ENCODE measurements at regions of chr5 and their contacts with region 1.

Region 1: GRCh38 chr5:177497292-177498033 is at the start of gene PDLIM7:
- DNase-seq: peak; percentile 98
- ATAC-seq: peak; percentile 88
- H3K4me3 ChIP-seq: peak within 1 kb of the TSS; percentile 66 to 67
- H3K27ac ChIP-seq: peak within 1 kb of the TSS; percentile 95 to 99
- H3K4me1 ChIP-seq: no peaks in the 10 kb centered on the region
- H3K27me3 ChIP-seq: no peaks in the 10 kb centered on the region
- total RNA-seq, gene PDLIM7: 510 to 729 TPM

Region 2: GRCh38 chr5:177390363-177391300 is 106.8 kb before region 1 on chr5:
- intact Hi-C with region 1: loop called (anchors 1 to 5 kb)
- DNase-seq: peak; percentile 85 to 89
- ATAC-seq: peak; percentile 92
- H3K4me3 ChIP-seq: no peak overlapping the region
- H3K27ac ChIP-seq: no peak overlapping the region
- H3K4me1 ChIP-seq: no peaks in the 10 kb centered on the region
- H3K27me3 ChIP-seq: no peaks in the 10 kb centered on the region

Region 3: DNA sequence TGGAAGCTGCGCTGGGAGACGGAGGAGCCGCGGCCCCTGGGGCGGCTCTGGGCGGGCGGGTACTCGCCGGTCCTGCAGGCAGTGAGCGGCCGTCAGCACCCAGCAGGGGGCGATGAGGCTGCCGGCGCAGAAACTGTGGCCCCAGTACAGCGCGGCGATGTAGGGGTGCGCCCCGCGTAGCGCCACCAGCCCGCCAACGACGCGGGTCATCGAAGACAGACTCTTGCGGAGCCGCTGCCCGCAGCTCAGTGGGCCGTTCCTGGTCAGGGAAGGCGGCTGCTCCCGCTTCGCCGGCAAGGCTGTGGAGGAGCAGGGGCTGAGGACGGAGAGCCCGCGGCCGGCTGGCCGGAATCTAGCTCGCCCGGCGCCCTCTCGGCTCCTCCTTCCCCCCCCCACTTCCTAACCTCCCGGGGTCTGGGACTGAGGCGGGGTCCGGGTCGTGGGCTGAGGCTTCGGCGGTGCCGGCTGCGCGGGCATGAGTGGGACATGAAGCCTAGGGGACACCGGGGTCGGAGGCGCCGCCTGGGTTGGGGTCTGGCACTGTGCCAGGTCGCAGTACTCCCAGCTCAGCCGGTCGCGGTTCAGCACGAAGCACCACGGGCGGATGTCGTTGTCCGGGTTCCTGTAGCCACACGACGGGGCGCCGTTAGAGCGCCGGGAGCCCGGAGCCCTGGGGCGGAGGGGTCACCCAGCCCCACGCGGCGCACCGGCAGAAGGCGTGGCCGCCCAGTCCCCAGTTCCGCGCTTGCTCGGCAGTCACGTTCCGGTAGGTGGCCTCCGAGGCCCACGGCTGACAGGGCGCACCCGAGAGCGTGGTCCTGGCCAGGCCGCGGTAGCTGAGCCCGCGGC is 93.4 kb before region 1 on chr5:
- intact Hi-C with region 1: no loop called
- DNase-seq: peak; percentile 90 to 96
- ATAC-seq: peak; percentile 95
- H3K4me3 ChIP-seq: peak overlapping the region in 1 of 2 donors; percentile 0
- H3K27ac ChIP-seq: no peak overlapping the region
- H3K4me1 ChIP-seq: no peaks in the 10 kb centered on the region
- H3K27me3 ChIP-seq: peaks cover 0 to 3% of the 10 kb centered on the region in 2 donors

Region 4: GRCh38 chr5:177425801-177426565 is 71.5 kb before region 1 on chr5:
- intact Hi-C with region 1: loop called in 1 of 2 experiments (anchors 2 kb)
- DNase-seq: peak; percentile 99 to 100
- ATAC-seq: peak; percentile 98
- H3K4me3 ChIP-seq: peak overlapping the region; percentile 36
- H3K27ac ChIP-seq: peak overlapping the region; percentile 79 to 94
- H3K4me1 ChIP-seq: peaks cover 0 to 3% of the 10 kb centered on the region in 2 donors
- H3K27me3 ChIP-seq: no peaks in the 10 kb centered on the region

Measured in aorta (tissue), 5 donors.